Activated CD8-positive, alpha-beta T cell treated with anti-CD3 and anti-CD28 coated beads for 36 hours (primary cell): ENCODE measurements at regions of chr3 and their contacts with region 1.

Region 1: GRCh38 chr3:56612146-56612545 is 55.2 kb downstream of the CCDC66 start:
- DNase-seq: peak; percentile 20
- ATAC-seq: peak; percentile 60
- H3K4me3 Mint-ChIP-seq: no peak overlapping the region
- H3K27ac Mint-ChIP-seq: peak overlapping the region; percentile 13
- H3K4me1 Mint-ChIP-seq: peaks cover 68% of the 10 kb centered on the region
- H3K27me3 Mint-ChIP-seq: no peaks in the 10 kb centered on the region
- CTCF ChIP-seq: no peak

Region 2: GRCh38 chr3:56467108-56467507 is 145.0 kb before region 1 on chr3:
- CTCF ChIA-PET with region 1: no interaction called
- POLR2A ChIA-PET with region 1: no interaction called
- intact Hi-C with region 1: no loop called
- DNase-seq: peak; percentile 63
- ATAC-seq: peak; percentile 77
- H3K4me3 Mint-ChIP-seq: peak overlapping the region; percentile 58
- H3K27ac Mint-ChIP-seq: no peak overlapping the region
- H3K4me1 Mint-ChIP-seq: peaks cover 5% of the 10 kb centered on the region
- H3K27me3 Mint-ChIP-seq: peaks cover 53% of the 10 kb centered on the region
- CTCF ChIP-seq: no peak

Region 3: DNA sequence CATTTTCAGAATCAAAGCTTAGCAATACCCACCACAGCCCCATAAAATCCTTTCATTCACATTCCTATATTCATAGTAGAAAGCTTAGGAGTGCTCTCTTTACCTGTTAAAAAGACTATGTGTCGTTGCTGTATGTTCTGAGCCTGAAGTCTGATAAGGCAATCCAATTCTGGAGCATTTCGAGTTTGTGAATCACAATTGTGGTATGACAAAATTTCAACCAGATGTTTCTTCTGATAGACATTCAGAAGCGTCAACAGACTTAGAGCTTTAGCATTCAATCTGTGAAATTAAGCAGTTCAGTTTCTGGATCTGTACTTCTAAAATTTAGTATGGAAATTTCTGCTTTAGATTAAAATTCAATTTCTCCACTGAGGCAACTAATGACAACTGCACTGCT is 12.6 kb after region 1 on chr3:
- CTCF ChIA-PET with region 1: interaction called, 14 read pairs
- POLR2A ChIA-PET with region 1: interaction called, 3 read pairs
- intact Hi-C with region 1: no loop called
- DNase-seq: no peak
- ATAC-seq: no peak
- H3K4me3 Mint-ChIP-seq: no peak overlapping the region
- H3K27ac Mint-ChIP-seq: no peak overlapping the region
- H3K4me1 Mint-ChIP-seq: peaks cover 13% of the 10 kb centered on the region
- H3K27me3 Mint-ChIP-seq: no peaks in the 10 kb centered on the region
- CTCF ChIP-seq: no peak

Region 4: DNA sequence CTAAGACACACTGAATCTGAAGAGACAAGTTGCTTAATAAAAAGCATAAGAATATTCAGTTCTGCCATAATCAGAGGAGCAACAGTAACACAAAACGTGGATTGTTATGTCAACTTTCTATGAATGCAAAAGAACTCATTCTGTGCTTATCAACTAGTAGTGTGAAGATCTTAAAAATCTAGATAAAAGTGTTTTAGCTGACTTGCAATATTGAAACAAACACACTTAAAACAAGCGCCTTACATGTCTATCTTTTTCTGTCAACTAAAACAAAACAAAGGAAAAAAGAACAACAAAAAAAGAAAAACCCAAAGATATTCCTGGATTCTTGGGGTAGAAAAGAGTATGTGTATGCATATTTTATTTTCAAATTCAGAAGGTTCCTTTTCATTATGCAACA is 33.3 kb after region 1 on chr3:
- CTCF ChIA-PET with region 1: no interaction called
- POLR2A ChIA-PET with region 1: no interaction called
- intact Hi-C with region 1: no loop called
- DNase-seq: no peak
- ATAC-seq: no peak
- H3K4me3 Mint-ChIP-seq: no peak overlapping the region
- H3K27ac Mint-ChIP-seq: no peak overlapping the region
- H3K4me1 Mint-ChIP-seq: peaks cover 29% of the 10 kb centered on the region
- H3K27me3 Mint-ChIP-seq: no peaks in the 10 kb centered on the region
- CTCF ChIP-seq: no peak

Region 5: GRCh38 chr3:56720849-56721248 is 108.7 kb after region 1 on chr3:
- CTCF ChIA-PET with region 1: no interaction called
- POLR2A ChIA-PET with region 1: no interaction called
- intact Hi-C with region 1: no loop called
- DNase-seq: no peak
- ATAC-seq: no peak
- H3K4me3 Mint-ChIP-seq: no peak overlapping the region
- H3K27ac Mint-ChIP-seq: peak overlapping the region; percentile 34
- H3K4me1 Mint-ChIP-seq: peaks cover 46% of the 10 kb centered on the region
- H3K27me3 Mint-ChIP-seq: no peaks in the 10 kb centered on the region
- CTCF ChIP-seq: no peak